Mucosa of descending colon (tissue), 3 donors: ENCODE measurements at regions of chr11 and their contacts with region 1.

Region 1: DNA sequence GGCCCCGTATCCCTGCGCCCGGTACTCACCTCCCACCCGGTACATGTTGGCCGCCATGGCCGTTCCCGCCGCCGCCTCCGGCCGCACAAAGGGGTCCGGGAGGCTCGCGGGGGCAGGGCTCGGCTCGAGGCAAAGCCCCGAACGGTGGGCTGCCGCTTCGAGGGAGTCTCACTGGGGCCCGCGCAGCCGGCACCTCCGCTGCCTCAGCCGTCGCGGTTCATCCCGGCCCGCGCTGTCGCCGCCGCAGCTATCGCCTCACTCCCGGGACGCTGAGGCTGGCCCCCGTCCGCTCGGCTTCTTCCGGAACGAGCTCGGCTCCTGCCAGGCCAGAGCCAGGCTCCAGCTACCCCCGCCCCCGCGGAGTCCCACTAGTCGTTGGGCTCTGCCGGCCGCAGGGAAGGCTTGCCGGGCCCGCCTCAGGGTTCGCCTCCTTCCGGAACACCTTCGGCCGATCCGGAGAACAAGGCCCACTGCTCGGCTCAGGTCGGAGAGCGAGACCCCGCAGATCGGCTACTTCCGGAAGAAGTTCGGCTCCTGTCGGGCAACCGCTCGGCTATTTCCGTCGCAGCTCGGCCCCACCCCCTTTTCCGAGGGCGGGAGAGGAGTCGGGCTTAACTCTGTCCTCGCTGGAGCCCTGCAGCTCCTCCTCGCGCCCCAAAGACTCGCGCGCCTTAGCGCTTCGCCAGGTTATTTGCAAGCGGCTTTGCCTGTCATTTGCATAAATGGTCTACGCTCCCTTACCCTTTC is at the start of gene MTA2:
- DNase-seq: peak; percentile 98 to 100 (median 98)
- ATAC-seq: peak; percentile 88
- H3K4me3 ChIP-seq: peak within 1 kb of the TSS; percentile 88
- H3K4me1 ChIP-seq: peaks cover 28% of the 10 kb centered on the region
- CTCF ChIP-seq: no peak
- total RNA-seq, gene MTA2: 70.7 to 92.1 (median 89.6) TPM

Region 2: GRCh38 chr11:62419314-62419929 is 182.1 kb before region 1 on chr11:
- intact Hi-C with region 1: no loop called
- DNase-seq: no peak
- ATAC-seq: peak; percentile 23
- H3K4me3 ChIP-seq: no peak overlapping the region
- H3K4me1 ChIP-seq: no peaks in the 10 kb centered on the region
- CTCF ChIP-seq: no peak

Region 3: DNA sequence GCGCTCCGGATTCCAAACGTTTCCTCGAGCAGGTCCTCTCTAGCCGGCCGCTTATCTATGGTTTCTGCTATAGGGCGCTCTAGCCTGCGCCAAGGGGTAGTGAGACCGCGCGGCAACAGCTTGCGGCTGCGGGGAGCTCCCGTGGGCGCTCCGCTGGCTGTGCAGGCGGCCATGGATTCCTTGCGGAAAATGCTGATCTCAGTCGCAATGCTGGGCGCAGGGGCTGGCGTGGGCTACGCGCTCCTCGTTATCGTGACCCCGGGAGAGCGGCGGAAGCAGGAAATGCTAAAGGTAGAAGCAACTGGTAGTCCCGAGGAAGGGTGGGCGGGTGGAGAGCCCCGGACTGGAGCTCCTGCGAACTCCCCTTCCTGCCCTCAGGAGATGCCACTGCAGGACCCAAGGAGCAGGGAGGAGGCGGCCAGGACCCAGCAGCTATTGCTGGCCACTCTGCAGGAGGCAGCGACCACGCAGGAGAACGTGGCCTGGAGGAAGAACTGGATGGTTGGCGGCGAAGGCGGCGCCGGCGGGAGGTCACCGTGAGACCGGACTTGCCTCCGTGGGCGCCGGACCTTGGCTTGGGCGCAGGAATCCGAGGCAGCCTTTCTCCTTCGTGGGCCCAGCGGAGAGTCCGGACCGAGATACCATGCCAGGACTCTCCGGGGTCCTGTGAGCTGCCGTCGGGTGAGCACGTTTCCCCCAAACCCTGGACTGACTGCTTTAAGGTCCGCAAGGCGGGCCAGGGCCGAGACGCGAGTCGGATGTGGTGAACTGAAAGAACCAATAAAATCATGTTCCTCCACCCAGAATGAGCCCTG is 70.2 kb after region 1 on chr11 and contains the starts of genes LBHD1 and UQCC3:
- intact Hi-C with region 1: loop called in 1 of 2 experiments (anchors 2 kb)
- DNase-seq: peak; percentile 85 to 89 (median 85)
- ATAC-seq: peak; percentile 82
- H3K4me3 ChIP-seq: peak within 1 kb of the TSS; percentile 77
- H3K4me1 ChIP-seq: peaks cover 31% of the 10 kb centered on the region
- CTCF ChIP-seq: no peak
- total RNA-seq, gene LBHD1: 7.4 to 10.6 (median 10.6) TPM
- total RNA-seq, gene UQCC3: 9.0 to 12.1 (median 10.8) TPM

Region 4: GRCh38 chr11:62753736-62754603 is 152.4 kb after region 1 on chr11 and contains the start of gene ZBTB3:
- intact Hi-C with region 1: no loop called
- DNase-seq: peak; percentile 97 to 98 (median 97)
- ATAC-seq: peak; percentile 96
- H3K4me3 ChIP-seq: peak within 1 kb of the TSS; percentile 16
- H3K4me1 ChIP-seq: peaks cover 13% of the 10 kb centered on the region
- CTCF ChIP-seq: no peak
- total RNA-seq, gene ZBTB3: 10.9 to 15.6 (median 13.0) TPM

Region 5: DNA sequence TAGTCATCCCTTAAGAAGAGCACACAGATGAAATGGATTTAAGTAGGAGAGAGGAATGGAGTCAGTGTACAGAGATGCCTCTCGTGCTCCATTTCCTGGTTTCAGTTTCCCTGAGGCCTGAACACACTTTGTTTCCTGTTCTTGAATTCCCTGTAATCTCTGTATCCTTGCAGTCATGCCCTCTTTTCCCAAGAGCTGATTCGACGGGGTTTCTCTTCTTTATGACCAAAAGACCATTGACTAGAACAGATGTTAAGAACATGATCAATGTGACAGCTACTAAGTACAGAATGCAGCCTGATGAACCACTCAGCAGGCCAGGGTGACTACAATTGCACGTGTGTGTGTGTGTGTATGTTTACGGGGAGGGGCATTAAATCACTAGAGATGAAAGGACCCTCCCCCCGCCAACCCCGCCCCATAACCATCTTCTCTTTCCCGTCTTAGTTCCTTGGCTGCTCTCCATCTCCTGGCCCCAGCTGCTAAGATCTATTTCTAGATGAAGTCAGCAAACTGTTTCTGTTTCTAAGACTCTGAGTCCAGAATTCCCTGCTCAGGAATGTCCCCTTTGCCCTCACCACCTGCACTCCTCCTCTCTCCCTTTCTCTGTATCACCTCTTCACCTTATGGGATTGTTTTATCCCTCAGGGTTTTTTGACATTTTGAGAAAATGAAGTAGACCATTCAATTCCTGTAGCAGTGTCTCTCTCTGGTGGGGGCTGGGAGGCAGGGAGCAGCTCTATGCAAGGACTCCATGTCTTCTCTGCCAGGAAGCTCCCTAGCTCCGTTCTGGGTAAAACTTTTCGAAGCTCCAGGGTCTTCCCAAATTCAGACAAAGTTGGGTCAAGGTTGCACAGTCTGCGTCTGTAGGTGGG is 357.2 kb after region 1 on chr11:
- intact Hi-C with region 1: no loop called
- DNase-seq: peak in 1 of 3 donors; percentile 40
- ATAC-seq: peak; percentile 90
- H3K4me3 ChIP-seq: no peak overlapping the region
- H3K4me1 ChIP-seq: no peaks in the 10 kb centered on the region
- CTCF ChIP-seq: no peak